Right cardiac atrium (tissue), 5 donors: ENCODE measurements at regions of chr7 and their contacts with region 1.

Region 1: GRCh38 chr7:30740424-30741181 is 11.3 kb upstream of the INMT start:
- DNase-seq: peak; percentile 68 to 91 (median 89)
- ATAC-seq: peak; percentile 64 to 74
- H3K4me3 ChIP-seq: no peak overlapping the region
- H3K27ac ChIP-seq: no peak overlapping the region
- H3K4me1 ChIP-seq: no peaks in the 10 kb centered on the region
- H3K27me3 ChIP-seq: no peaks in the 10 kb centered on the region

Region 2: GRCh38 chr7:30564243-30564892 is 176.2 kb before region 1 on chr7:
- intact Hi-C with region 1: no loop called
- DNase-seq: peak; percentile 81 to 89 (median 83)
- ATAC-seq: peak; percentile 91 to 93
- H3K4me3 ChIP-seq: no peak overlapping the region
- H3K27ac ChIP-seq: no peak overlapping the region
- H3K4me1 ChIP-seq: peaks cover 6% of the 10 kb centered on the region
- H3K27me3 ChIP-seq: no peaks in the 10 kb centered on the region

Region 3: DNA sequence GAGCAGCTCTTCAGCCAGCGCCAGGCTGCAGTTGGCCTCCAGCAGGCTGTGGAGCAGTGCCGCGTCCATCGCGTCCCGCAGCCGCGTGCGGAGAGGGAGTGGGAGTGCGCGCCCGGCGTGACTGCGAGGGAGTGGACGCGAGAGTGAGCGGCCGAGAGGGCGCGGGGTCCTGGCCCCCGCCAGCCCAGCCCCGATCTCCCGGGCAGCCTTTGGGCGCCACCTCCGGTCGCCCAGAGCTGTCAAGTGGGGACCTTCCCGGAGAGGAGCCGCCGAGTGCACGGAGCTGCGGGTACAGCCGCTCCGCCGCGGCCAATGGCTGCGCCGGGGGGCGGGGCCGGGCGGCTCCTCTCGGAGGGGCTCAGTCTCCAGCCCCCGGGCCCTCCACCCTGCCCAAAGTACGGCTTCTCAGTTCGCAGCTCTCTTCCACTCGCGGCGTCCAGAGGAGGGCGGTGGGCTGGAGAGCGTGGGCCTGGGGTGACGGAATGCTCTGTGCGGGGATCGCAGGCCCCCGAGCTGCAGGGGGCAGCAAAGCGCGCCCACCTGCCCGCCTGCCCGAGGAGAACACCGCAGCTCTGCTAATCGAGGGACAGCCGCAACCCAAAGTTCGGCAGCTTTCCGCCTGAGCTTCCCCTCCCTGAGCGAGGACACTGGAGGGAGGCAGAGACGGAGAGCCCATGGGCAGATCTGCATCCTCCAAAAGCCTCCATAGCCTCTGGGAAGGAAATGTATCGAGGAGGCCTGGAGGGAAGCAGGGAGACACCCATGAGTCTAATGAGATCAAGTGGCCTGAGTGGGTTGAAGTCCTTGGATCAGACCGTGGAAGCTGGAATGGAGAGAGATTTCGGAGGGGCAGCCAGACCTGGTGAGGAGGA is 58.2 kb before region 1 on chr7 and contains the start of gene CRHR2:
- intact Hi-C with region 1: loop called in 1 of 4 experiments (anchors 5 kb)
- DNase-seq: peak in 2 of 3 donors; percentile 60 to 67
- ATAC-seq: peak; percentile 72 to 80
- H3K4me3 ChIP-seq: peak within 1 kb of the TSS; percentile 57
- H3K27ac ChIP-seq: no peak within 1 kb of the TSS
- H3K4me1 ChIP-seq: no peaks in the 10 kb centered on the region
- H3K27me3 ChIP-seq: no peaks in the 10 kb centered on the region
- total RNA-seq, gene CRHR2: 0.46 TPM in 1 of 4 donors, not detected in the others